Gastrocnemius medialis (tissue), 4 donors: ENCODE measurements at regions of chr1 and their contacts with region 1.

Region 1: DNA sequence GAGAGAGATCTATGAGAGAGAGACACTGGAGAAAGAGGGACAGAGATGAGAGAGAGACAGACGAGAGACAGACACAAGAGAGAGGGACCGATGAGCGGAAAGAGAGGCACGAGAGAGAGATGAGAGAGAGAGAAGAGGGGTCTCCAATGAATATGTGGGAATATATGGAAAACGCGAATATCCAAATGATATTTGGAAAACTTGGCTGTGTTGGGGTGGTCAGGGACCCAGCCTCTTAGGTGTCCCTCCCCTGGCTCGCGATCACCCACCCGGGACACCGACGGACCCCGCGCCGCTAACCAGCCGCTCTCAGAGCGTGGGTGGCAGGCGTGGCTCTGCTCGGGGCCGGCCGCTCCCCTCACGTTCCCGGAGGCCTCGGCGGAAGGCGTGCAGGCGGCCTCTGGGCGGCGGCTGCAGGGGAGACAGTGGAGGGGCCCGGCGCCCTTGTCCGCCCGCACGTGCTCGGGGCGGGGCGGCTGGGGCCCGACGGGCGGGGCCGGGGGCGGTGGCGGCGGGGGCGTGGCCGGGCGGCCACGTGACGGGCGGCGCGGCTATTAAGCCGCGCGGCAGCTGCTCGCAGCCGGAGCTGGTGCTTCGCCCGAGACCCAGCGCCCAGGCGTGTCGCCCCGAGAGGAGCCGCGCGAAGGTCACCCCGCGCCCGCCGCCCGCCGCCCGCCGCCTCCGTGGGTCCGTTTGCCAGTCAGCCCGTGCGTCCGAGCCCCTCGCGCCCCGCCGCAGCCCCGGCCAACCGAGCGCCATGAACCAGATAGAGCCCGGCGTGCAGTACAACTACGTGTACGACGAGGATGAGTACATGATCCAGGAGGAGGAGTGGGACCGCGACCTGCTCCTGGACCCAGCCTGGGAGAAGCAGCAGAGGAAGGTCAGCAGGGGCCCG is at the start of gene ACTN2:
- DNase-seq: peak; percentile 61 to 79
- ATAC-seq: peak; percentile 43 to 51
- H3K4me3 ChIP-seq: peak within 1 kb of the TSS; percentile 70 to 84 (median 72)
- H3K27ac ChIP-seq: peak within 1 kb of the TSS; percentile 96 to 97 (median 96)
- H3K4me1 ChIP-seq: peaks cover 19 to 28% of the 10 kb centered on the region in 2 donors
- H3K27me3 ChIP-seq: no peaks in the 10 kb centered on the region
- CTCF ChIP-seq: no peak
- POLR2A ChIP-seq: peak; percentile 94
- total RNA-seq, gene ACTN2: 503 to 1,706 (median 1,214) TPM

Region 2: GRCh38 chr1:236623371-236624166 is 62.6 kb before region 1 on chr1:
- in situ Hi-C with region 1: loop called in 2 of 4 experiments (anchors 5 kb)
- intact Hi-C with region 1: loop called (anchors 2 kb)
- DNase-seq: no peak
- ATAC-seq: peak in 1 of 2 donors; percentile 34
- H3K4me3 ChIP-seq: no peak overlapping the region
- H3K27ac ChIP-seq: peak overlapping the region; percentile 83 to 91 (median 86)
- H3K4me1 ChIP-seq: peaks cover 20 to 40% of the 10 kb centered on the region in 2 donors
- H3K27me3 ChIP-seq: no peaks in the 10 kb centered on the region
- CTCF ChIP-seq: no peak
- POLR2A ChIP-seq: no peak

Region 3: GRCh38 chr1:236659792-236660587 is 26.2 kb before region 1 on chr1:
- in situ Hi-C with region 1: no loop called
- intact Hi-C with region 1: loop called (anchors 2 kb)
- DNase-seq: no peak
- ATAC-seq: peak; percentile 56 to 76
- H3K4me3 ChIP-seq: no peak overlapping the region
- H3K27ac ChIP-seq: peak overlapping the region; percentile 70 to 80 (median 76)
- H3K4me1 ChIP-seq: peaks cover 11 to 14% of the 10 kb centered on the region in 2 donors
- H3K27me3 ChIP-seq: no peaks in the 10 kb centered on the region
- CTCF ChIP-seq: no peak
- POLR2A ChIP-seq: no peak

Region 4: GRCh38 chr1:236702791-236703394 is 16.7 kb after region 1 on chr1:
- in situ Hi-C with region 1: no loop called
- intact Hi-C with region 1: loop called (anchors 2 kb)
- DNase-seq: no peak
- ATAC-seq: peak in 1 of 2 donors; percentile 2
- H3K4me3 ChIP-seq: peak overlapping the region in 2 of 4 donors; percentile 8 to 16
- H3K27ac ChIP-seq: peak overlapping the region; percentile 96 to 97 (median 96)
- H3K4me1 ChIP-seq: peaks cover 85 to 90% of the 10 kb centered on the region in 2 donors
- H3K27me3 ChIP-seq: no peaks in the 10 kb centered on the region
- CTCF ChIP-seq: no peak
- POLR2A ChIP-seq: no peak

Region 5: DNA sequence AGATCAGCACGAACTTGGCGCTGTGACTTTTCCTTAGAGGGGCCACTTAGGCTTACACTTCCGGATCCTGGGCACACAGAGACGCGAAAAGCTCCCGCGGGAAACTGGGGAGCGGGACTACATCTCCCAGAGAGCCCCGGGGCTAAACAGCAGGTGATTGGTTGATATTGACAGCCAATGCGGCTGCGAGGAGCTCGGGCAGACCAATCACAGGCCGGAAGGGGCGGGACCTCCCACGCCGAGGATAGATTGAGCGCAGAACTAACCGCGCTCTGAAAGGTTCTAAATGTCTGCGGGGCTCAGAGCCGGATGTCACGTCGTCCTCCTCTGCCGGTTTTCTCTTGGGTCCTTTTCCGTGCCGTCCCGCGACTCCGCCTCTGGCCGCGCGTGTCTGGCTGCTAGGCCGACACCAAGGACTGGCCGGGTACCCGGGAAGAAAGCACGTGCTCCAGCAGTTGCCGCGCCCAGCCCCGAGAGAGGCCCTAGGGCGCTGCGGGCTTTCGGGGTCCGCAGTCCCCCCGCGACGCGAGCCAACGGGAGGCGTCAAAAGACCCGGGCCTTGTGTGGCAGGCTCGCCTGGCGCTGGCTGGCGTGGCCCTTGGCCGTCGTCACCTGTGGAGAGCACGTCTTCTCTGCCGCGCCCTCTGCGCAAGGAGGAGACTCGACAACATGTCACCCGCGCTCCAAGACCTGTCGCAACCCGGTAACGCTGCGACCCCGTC is 109.0 kb after region 1 on chr1 and contains the start of gene MTR:
- in situ Hi-C with region 1: no loop called
- intact Hi-C with region 1: loop called (anchors 5 kb)
- DNase-seq: peak; percentile 99
- ATAC-seq: peak; percentile 96
- H3K4me3 ChIP-seq: peak within 1 kb of the TSS; percentile 79 to 86 (median 84)
- H3K27ac ChIP-seq: peak within 1 kb of the TSS; percentile 92 to 94 (median 93)
- H3K4me1 ChIP-seq: peaks cover 39 to 42% of the 10 kb centered on the region in 2 donors
- H3K27me3 ChIP-seq: no peaks in the 10 kb centered on the region
- CTCF ChIP-seq: no peak
- POLR2A ChIP-seq: peak; percentile 89 to 93
- total RNA-seq, gene MTR: 23.0 to 46.3 (median 29.1) TPM